Naive thymus-derived CD8-positive, alpha-beta T cell (primary cell): ENCODE measurements at regions of chr16 and their contacts with region 1.

Region 1: GRCh38 chr16:30874821-30875717 is 18.8 kb downstream of the BCL7C start:
- DNase-seq: peak; percentile 75 to 90 (median 87)
- ATAC-seq: peak; percentile 88 to 89
- H3K4me3 Mint-ChIP-seq: peak overlapping the region; percentile 78 to 99 (median 98)
- H3K27ac Mint-ChIP-seq: peak overlapping the region; percentile 90 to 99 (median 97)
- H3K4me1 Mint-ChIP-seq: peaks cover 18 to 55% (median 33%) of the 10 kb centered on the region in 4 donors
- H3K27me3 Mint-ChIP-seq: no peaks in the 10 kb centered on the region

Region 2: DNA sequence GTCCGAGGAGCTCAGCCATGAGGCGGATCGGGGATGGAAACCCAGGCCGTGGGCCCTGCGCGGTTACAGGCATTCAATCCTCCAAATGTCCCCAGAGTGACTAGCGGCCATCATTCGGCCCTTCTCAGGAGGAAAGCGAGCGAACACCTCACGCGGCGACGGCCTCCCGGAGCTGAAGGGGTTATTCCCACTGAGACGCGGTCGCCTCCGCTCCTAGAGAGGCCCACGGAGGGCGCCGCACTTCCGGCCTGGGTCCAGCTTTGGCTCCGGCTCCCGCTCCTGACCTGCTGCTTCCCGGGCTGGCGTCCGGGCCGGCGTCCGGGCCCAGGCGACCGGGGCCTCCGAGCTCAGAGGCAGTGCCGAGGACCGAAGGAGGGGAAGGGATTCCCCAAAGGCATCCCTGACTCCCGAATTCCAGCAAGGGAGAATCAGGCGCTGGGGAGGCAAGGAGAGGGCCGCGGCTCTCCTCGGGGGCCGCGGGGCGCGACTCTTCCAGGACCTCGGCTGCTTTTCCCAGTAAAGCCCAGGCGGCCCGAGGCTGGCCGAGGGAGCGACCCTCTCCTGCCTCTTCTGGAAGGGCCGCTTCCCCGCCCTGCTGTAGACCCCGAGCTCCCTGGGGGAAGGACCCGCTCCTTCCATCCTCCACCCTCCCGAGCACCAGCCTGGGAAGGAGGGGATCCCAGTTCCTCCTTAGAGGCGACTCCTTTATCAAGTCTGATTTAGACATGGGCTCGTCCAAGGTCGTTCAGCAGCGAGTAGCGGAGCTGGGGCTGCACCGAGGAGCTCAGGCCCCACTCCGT is 69.5 kb before region 1 on chr16:
- POLR2A ChIA-PET with region 1: interaction called, 51 read pairs
- DNase-seq: peak; percentile 38 to 72 (median 56)
- ATAC-seq: peak; percentile 88 to 89
- H3K4me3 Mint-ChIP-seq: peak overlapping the region; percentile 78 to 98 (median 90)
- H3K27ac Mint-ChIP-seq: peak overlapping the region; percentile 79 to 94 (median 88)
- H3K4me1 Mint-ChIP-seq: peaks cover 12 to 30% (median 27%) of the 10 kb centered on the region in 4 donors
- H3K27me3 Mint-ChIP-seq: peaks cover 0 to 2% (median 0%) of the 10 kb centered on the region in 5 donors

Region 3: DNA sequence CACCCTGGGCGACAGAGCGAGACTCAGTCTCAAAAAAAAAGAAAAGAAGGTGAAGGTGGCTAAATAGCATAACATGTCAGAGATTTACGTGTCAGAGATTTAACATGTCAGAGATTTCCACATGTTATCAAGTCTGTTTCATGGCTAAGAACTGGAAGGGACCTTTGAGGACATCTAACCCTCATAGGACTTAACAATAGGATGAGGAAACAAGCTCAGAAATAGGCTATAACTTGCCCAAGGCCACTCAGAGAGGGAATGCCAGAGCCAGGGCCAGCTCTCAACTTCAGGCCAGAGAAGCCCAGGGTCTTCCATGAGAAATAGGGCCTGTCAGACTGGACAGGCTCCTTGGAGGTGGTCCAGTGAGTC is 61.3 kb before region 1 on chr16:
- POLR2A ChIA-PET with region 1: interaction called, 10 read pairs
- DNase-seq: no peak
- ATAC-seq: peak in 1 of 2 donors; percentile 19
- H3K4me3 Mint-ChIP-seq: peak overlapping the region; percentile 77 to 88 (median 84)
- H3K27ac Mint-ChIP-seq: peak overlapping the region; percentile 80 to 95 (median 92)
- H3K4me1 Mint-ChIP-seq: peaks cover 8 to 17% (median 14%) of the 10 kb centered on the region in 4 donors
- H3K27me3 Mint-ChIP-seq: peaks cover 0 to 2% (median 0%) of the 10 kb centered on the region in 5 donors

Region 4: GRCh38 chr16:30844671-30845449 is 30.2 kb before region 1 on chr16:
- POLR2A ChIA-PET with region 1: interaction called, 18 read pairs
- DNase-seq: peak; percentile 60 to 93 (median 82)
- ATAC-seq: peak; percentile 91 to 98
- H3K4me3 Mint-ChIP-seq: peak overlapping the region; percentile 8 to 69 (median 40)
- H3K27ac Mint-ChIP-seq: peak overlapping the region; percentile 19 to 91 (median 83)
- H3K4me1 Mint-ChIP-seq: peaks cover 8 to 11% (median 9%) of the 10 kb centered on the region in 4 donors
- H3K27me3 Mint-ChIP-seq: no peaks in the 10 kb centered on the region

Region 5: GRCh38 chr16:30893744-30894539 is 18.9 kb after region 1 on chr16 and contains the start of gene BCL7C:
- POLR2A ChIA-PET with region 1: interaction called, 94 read pairs
- DNase-seq: peak; percentile 37 to 85 (median 61)
- ATAC-seq: peak; percentile 67 to 81
- H3K4me3 Mint-ChIP-seq: peak within 1 kb of the TSS; percentile 79 to 93 (median 88)
- H3K27ac Mint-ChIP-seq: peak within 1 kb of the TSS; percentile 83 to 96 (median 94)
- H3K4me1 Mint-ChIP-seq: peaks cover 22 to 55% (median 51%) of the 10 kb centered on the region in 4 donors
- H3K27me3 Mint-ChIP-seq: no peaks in the 10 kb centered on the region
- polyA plus RNA-seq, gene BCL7C: 33.9 to 38.8 (median 34.7) TPM

Region 6: GRCh38 chr16:30902029-30902972 is 27.2 kb after region 1 on chr16:
- POLR2A ChIA-PET with region 1: interaction called, 125 read pairs
- DNase-seq: peak; percentile 31 to 71 (median 56)
- ATAC-seq: peak; percentile 85 to 87
- H3K4me3 Mint-ChIP-seq: peak overlapping the region; percentile 86 to 99 (median 96)
- H3K27ac Mint-ChIP-seq: peak overlapping the region; percentile 95 to 100 (median 98)
- H3K4me1 Mint-ChIP-seq: peaks cover 15 to 39% (median 31%) of the 10 kb centered on the region in 4 donors
- H3K27me3 Mint-ChIP-seq: no peaks in the 10 kb centered on the region

Region 7: GRCh38 chr16:30922420-30922959 is 47.4 kb after region 1 on chr16:
- POLR2A ChIA-PET with region 1: interaction called, 11 read pairs
- DNase-seq: peak; percentile 95 to 100 (median 100)
- ATAC-seq: peak; percentile 79 to 81
- H3K4me3 Mint-ChIP-seq: peak overlapping the region; percentile 96 to 100 (median 99)
- H3K27ac Mint-ChIP-seq: peak overlapping the region; percentile 97 to 100 (median 99)
- H3K4me1 Mint-ChIP-seq: peaks cover 21 to 33% (median 27%) of the 10 kb centered on the region in 4 donors
- H3K27me3 Mint-ChIP-seq: no peaks in the 10 kb centered on the region